Thyroid gland (tissue), 4 donors: ENCODE measurements at regions of chr19 and their contacts with region 1.

Region 1: GRCh38 chr19:2494444-2495129 is 18.7 kb downstream of the GADD45B start:
- DNase-seq: peak; percentile 75 to 84
- H3K4me3 ChIP-seq: peak overlapping the region; percentile 5 to 54 (median 23)
- H3K27ac ChIP-seq: peak overlapping the region; percentile 85 to 98 (median 93)
- H3K4me1 ChIP-seq: peaks cover 26 to 41% of the 10 kb centered on the region in 2 donors
- H3K27me3 ChIP-seq: no peaks in the 10 kb centered on the region
- CTCF ChIP-seq: no peak
- POLR2A ChIP-seq: peak in 1 of 2 donors; percentile 65

Region 2: DNA sequence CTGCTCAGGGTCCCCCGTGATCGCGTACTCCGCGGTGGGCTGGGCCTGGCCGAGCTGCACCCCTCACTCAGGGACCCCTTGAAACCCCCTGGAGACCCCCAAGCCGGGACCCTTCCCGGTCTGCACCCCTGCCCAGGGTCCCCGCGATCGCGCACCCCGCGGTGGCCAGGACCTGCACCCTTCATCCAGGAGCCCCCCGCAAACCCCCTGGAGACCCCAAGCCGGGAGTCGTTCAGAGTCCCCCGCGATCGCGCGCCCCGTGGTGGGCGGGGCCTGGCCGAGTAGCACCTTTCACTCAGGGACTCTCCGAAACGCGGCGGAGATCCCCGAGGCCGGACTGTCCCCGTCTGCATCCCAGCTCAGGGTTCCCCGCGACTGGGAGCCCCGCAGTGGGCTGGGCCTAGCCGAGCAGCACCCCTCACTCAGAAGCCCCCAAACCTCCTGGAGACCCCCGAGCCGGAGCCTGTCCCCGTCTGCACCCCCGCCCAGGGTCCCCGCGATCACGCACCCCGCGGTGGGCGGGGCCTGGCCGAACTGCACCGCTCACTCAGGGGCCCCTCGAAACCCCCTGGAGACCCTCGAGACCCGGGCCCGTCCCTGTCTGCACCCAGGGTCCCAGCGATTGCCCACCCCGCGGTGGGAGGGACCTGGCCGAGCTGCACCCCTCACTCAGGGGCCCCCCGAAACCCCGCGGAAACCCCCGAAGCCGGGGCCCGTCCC is 38.6 kb before region 1 on chr19:
- intact Hi-C with region 1: no loop called
- DNase-seq: peak; percentile 47
- H3K4me3 ChIP-seq: peak overlapping the region; percentile 42 to 98 (median 81)
- H3K27ac ChIP-seq: peak overlapping the region in 1 of 3 donors; percentile 48
- H3K4me1 ChIP-seq: peaks cover 7 to 12% of the 10 kb centered on the region in 2 donors
- H3K27me3 ChIP-seq: no peaks in the 10 kb centered on the region
- CTCF ChIP-seq: no peak
- POLR2A ChIP-seq: no peak

Region 3: DNA sequence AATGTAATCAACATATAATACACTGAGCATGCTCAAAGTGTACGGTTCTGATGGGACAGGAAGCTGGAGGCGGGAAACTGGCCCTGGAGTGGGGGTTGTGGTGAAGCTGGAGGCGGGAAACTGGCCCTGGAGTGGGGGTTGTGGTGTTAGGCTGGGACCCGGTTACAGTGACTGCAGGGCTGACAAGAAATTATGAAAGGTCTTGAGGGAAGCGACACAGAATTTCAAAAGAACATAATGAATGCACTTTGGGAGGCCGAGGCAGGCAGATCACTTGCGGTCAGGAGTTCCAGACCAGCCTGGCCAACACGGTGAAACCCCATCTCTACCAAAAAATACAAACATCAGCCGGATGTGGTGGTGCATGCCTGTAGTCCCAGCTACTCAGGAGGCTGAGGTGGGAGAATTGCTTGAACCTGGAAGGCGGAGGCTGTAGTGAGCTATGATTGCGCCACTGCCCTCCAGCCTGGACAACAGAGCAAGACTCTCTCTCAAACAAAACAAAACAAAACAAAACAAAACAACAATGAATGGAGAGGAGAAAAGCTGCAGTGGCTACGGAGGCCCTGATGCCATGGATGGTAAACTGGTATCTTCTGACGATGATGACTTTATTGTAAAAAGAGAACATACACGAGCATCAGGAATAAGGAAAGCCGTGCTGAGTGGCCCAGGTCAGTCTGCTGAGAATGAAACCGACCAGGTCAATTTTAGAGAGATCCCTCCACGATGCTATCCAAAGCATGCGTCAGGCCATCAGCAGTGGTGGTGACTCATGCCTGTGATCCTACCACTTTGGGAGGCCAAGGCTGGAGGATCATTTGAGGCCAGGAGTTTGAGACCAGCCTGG is 43.2 kb after region 1 on chr19:
- intact Hi-C with region 1: loop called (anchors 5 kb)
- DNase-seq: no peak
- H3K4me3 ChIP-seq: no peak overlapping the region
- H3K27ac ChIP-seq: no peak overlapping the region
- H3K4me1 ChIP-seq: peaks cover 23 to 29% of the 10 kb centered on the region in 2 donors
- H3K27me3 ChIP-seq: no peaks in the 10 kb centered on the region
- CTCF ChIP-seq: no peak
- POLR2A ChIP-seq: no peak